Left colon (tissue), 2 donors: ENCODE measurements at regions of chr14 and their contacts with region 1.

Region 1: GRCh38 chr14:74612350-74613021 is 449 bp upstream of the LTBP2 start:
- DNase-seq: peak; percentile 41 to 87
- ATAC-seq: peak; percentile 80

Region 2: DNA sequence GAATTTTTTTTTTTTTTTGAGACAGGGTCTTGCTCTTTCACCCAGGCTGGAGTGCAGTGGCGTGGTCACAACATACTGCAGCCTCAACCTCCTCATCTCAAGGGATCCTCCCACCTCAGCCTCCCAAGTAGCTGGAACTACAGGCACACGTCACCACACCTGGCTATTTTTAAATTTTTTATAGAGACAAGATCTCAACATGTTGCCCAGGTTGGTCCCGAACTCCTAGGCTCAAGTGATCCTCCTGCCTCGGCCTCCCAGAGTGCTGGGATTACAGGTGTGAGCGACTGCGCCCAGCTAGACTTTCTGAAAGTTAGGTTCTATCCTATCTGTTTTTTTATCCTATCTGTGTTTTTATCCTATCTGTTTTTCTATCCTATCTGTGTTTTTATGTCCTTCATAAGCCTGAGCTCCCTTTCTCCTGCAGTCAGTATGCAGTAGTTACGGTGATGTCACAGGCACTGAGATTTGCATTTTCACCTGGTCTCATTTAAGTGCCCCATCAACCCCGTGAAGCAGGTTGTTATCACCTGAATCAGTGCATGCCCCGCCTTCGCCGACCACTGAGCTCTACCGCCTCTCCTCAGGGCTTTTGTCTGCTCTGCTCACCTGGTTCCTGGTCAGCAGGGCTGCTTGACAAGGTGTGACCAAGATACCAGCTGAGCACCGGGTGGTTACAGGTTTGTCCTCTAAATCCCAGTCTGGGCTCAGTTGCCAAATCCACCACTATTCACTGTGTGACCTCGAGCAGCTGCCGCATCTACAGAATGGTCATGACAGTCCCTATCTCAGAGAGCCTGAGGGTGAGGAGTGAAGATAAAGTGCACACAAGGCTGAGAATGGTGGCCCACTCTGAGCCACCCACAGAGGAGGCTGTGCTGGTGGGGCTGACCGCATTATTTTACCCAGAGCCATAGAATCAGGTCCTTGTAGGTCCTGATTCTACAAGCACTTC is 219.6 kb before region 1 on chr14:
- intact Hi-C with region 1: no loop called
- DNase-seq: no peak
- ATAC-seq: no peak

Region 3: DNA sequence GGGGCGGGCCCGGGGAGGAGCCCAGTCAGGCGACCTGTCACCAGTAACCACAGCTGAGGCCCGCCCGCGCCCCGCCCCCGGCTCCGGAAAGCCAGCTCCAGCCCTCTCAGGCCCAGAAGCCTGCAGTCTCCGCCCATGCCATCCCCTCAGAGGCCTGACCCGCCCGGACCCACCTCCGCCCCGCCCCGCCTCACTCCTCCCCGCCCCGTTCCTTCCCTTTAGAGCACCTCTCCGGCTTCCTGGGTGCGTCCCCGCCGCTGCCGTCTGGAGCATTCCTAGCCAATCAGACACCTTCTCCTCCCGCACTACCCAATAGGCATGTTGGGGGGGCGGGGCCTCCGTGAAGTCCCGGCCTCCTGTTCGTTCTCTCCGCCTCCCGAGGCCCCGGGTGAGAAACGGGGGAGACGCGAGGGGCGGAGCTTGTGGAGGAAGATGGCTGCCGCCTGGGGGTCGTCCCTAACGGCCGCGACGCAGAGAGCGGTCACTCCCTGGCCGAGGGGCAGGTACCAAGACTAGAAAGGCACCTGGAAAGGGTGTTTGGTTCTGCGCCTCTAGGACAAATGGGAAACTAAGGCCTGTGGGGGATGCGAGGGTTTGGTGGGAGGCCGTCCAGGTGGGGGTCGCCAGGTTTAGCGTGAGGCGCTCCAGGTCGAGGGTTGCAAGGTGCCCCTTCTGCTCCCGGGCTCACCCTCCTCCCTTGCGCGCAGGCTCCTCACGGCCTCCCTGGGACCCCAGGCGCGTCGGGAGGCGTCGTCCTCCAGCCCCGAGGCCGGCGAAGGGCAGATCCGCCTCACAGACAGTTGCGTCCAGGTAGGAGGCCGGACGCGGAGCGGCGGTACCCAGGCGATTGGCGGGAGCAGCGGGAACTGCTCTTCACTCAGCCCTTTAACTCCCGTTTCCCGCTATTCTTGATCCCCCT is 118.9 kb before region 1 on chr14 and contains the start of gene ISCA2:
- intact Hi-C with region 1: loop called in 1 of 2 experiments (anchors 10 kb)
- DNase-seq: peak; percentile 100
- ATAC-seq: peak; percentile 91
- total RNA-seq, gene ISCA2: 30.6 to 35.2 TPM

Region 4: GRCh38 chr14:74583689-74584434 is 28.6 kb before region 1 on chr14:
- intact Hi-C with region 1: no loop called
- DNase-seq: no peak
- ATAC-seq: no peak

Region 5: GRCh38 chr14:74804219-74804826 is 191.8 kb after region 1 on chr14:
- intact Hi-C with region 1: loop called in 1 of 2 experiments (anchors 10 kb)
- DNase-seq: peak in 1 of 2 donors; percentile 16
- ATAC-seq: peak; percentile 69